Cardiac septum (tissue), 1 donor: ENCODE measurements at regions of chr18 and their contacts with region 1.

Region 1: GRCh38 chr18:26656944-26657536 is 108.7 kb upstream of the KCTD1 start:
- DNase-seq: peak; percentile 88

Region 2: GRCh38 chr18:25953126-25953525 is 703.9 kb before region 1 on chr18:
- intact Hi-C with region 1: no loop called
- DNase-seq: no peak

Region 3: GRCh38 chr18:26383454-26384270 is 273.4 kb before region 1 on chr18:
- intact Hi-C with region 1: loop called (anchors 5 kb)
- DNase-seq: no peak

Region 4: DNA sequence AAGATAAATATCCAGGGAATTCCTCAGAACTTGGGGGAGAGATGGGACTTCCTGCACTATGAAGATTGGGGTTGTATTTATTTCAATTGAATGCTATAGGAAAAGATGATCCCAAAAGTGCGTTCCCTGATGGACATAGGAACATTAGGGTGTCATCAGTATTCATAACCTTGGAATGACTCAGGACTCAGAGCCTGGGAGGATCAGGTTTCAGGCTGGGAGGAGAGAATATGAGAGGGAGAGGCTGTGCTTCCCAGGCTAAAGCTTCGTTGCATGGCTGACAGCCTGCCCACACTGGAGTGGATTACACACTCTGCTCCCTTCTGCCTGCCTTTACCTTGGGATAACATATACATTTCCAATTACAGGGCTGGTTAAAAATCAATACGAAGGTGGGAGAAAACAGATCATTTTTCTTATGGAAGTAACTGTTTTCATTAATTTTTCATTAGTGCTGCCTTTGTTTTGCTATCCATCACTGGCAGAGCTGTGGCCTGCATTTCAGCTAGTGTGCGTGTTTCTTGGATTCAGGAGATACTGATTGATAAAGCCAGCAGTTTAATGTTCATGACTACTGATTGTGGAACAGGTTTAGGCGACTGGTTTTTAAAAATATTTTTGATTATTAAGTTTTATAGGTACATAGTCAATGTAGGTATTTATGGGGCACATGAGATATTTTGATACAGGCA is 227.4 kb before region 1 on chr18:
- intact Hi-C with region 1: no loop called
- DNase-seq: peak; percentile 50

Region 5: DNA sequence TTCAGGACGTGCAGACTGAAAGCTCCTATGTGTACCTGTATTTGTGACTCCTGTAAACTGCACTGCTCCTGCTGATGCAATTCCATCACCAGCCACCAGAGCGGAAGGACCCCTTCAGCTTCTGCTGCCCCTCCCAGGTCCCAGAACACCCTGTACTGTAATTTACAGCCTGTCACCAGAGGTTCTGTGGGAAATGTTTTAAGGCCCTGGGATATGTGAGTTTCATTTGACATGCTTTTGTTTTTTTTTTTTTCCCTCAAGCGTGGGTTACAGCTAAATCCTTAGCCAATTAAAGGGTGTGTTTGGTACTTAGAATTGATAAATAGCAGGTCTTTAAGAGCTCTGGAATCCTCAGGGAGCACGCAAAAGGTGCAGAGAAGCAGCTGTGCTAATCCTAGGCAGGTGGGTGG is 188.1 kb before region 1 on chr18:
- intact Hi-C with region 1: loop called (anchors 10 kb)
- DNase-seq: no peak

Region 6: DNA sequence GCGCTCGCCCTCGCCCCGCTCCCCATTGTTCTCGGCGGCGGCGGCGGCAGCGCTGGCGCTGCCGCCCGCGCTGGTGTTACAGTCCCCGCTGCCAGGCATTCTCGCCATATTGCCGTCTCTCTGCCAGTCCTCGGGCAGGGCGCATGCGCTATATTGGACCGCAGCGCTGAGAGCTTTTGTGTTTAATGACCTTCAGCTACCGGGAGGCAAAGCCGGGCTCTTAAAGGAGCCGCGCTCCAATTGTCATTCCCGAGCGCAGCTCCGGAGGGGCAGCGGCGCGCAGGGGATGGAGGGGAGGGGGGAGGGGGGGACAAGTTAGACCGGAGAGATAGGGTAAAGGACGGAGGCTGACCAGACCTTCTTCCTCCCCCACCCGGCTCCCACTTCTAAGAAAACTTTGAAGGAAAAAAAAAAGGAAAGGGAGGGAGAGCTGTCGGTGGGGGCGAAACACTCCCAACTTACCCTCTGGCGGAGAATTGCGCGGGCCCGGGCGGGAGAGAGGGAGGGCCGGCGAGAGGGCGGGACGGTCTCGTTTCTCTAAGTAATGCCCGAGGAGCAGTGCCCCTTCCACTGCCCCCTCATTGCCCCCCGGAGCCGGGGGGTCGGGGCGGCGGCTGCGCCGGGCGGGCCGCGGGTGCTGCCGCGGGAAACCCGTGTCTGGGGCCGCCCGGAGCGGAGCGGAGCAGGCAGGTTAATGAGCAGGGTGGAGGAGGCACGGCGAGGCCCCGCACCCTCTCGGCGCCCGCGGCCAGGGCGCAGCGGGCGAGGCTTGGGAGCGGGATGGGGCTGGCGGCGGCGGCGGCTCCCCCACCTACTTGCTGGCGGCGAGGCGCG is 108.4 kb before region 1 on chr18 and contains the start of gene KCTD1:
- intact Hi-C with region 1: loop called (anchors 2 kb)
- DNase-seq: peak; percentile 91
- total RNA-seq, gene KCTD1: 10.1 TPM